GM13977 (cell line): ENCODE measurements at regions of chr16 and their contacts with region 1.

Region 1: GRCh38 chr16:10256784-10257641 is 74.8 kb upstream of the GRIN2A start:
- DNase-seq: peak; percentile 81
- CTCF ChIP-seq: peak; percentile 76

Region 2: DNA sequence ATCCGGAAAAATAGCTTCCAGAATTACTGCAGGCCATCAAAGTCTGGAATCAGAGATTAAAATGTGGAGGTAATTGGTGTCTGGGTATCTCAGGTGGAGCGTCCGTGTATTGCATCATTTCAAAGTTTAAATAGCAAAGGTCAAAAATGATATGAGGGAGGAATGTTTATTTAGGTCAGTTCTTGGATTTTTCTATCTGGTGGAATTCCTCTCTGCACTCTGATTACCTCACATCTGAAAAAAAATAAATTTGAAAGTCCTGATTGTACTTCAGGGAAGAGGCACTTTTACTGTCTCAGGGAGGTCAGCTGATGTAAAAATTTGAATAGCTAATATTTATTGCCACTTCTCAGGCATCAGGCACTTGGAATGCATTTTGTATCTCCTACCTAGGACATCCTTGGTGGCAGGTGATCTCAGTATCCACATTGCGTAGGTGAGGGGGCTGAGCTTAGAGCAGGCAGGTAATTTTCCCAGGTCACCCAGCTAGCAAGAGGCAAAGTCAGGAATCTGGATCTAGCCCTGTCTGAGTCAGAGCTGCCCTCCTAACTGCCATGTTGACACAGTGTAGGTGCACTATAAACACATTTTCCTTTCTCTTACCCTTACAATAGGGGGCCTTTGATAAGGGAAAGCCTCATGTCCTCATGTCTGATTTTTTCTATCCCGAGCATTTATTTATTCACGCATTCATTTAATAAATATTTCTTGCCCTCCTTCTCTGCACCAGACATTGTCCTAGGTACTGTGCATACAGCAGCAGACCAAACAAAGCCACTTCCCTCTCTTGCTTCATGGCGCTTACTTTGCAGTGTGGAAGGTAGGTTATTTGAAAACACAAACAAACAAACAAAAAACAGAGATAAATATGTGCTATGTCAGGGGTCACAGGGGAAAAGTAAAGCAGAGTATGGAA is 711.2 kb before region 1 on chr16:
- in situ Hi-C with region 1: no loop called
- DNase-seq: no peak
- CTCF ChIP-seq: no peak

Region 3: DNA sequence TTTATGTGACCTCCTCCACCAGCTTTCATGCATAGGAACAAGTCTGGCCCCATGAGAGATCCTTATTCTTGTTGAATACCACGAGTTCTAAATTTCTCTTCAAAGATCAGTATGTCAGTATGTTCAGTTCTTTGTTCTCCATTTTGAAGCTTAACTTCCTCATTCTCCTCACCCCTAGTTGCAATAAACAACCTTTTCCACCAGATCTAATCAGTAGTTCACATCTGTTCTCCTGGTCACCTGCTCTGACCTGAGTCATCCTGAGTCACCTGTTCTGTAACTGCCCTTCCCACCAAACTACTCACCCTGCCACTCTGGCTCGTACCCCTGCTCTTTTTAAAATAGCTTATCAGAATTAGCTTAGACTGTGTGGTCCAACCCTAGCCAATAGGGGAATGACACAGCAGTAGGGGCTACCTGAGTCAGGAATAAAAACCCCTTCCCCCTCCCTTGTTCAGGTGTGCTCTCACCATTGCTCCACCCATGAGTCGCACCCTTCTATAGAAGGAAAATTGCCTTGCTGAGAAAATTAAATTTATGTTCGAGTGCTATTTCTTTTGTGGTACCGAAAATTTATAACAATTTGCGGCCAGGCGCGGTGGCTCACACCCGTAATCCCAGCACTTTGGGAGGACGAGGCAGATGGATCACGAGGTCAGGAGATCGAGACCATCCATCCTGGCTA is 228.8 kb after region 1 on chr16:
- in situ Hi-C with region 1: no loop called
- DNase-seq: no peak
- CTCF ChIP-seq: no peak

Region 4: DNA sequence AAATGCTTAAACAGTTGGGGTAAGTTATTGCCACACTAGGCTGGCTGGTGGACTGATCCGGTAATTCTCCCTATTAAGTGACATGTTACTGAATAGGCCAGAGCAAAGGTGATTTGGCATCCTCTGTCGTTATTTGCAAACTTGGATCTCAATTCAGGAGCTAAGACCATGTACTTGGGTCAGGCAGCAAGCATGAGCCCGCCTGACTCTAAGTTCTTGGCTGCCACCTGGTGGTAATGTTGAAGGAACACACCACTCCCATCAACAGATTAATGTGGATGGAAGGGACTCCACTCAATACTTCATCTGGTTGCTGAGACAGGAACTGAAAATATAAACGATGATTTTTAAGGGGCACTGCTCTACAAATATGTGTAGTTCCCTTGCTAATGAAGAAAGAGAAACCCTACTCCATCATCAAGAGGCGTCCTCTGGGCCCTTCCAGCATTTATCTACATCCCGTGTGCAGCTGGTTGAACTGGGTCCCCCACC is 252.6 kb after region 1 on chr16:
- in situ Hi-C with region 1: loop called (anchors 5 kb)
- DNase-seq: peak; percentile 81
- CTCF ChIP-seq: peak; percentile 81

Region 5: DNA sequence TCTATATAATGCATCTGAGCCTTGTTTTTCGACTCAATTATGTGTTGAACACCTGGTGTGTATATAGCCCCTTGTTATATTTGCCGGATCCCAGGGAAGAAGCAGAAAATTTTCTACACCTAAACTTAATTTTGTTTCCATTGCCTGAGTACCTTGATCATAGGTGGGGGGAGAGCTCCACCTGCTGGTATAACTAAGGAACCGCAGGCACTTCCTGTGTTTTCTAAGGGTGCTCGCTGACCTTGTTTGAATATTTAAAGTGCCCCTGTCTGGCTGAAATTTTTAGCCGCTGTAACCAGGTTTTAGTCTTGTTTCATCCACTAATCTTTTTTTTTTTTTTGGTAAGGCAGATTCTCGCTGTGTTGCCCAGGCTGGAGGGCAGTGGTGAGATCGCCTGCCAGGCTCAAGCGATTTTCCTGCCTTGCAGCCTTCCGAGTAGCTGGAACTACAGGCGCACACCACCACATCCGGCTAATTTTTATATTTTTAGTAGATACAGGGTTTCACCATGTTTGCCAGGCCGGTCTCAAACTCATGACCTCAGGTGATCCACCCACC is 480.1 kb after region 1 on chr16:
- in situ Hi-C with region 1: loop called (anchors 10 kb)
- DNase-seq: peak; percentile 80
- CTCF ChIP-seq: peak; percentile 80